ENCODE measurements at regions of chr9 and their contacts with region 1.

Region 1: GRCh38 chr9:89602978-89603766 is 1.6 kb upstream of the GADD45G start:
- DNase-seq: peak; percentile 85
- H3K4me3 Mint-ChIP-seq: peak overlapping the region; percentile 92
- H3K27ac Mint-ChIP-seq: peak overlapping the region; percentile 81
- H3K4me1 Mint-ChIP-seq: peaks cover 32% of the 10 kb centered on the region
- H3K27me3 Mint-ChIP-seq: peaks cover 10% of the 10 kb centered on the region

Region 2: DNA sequence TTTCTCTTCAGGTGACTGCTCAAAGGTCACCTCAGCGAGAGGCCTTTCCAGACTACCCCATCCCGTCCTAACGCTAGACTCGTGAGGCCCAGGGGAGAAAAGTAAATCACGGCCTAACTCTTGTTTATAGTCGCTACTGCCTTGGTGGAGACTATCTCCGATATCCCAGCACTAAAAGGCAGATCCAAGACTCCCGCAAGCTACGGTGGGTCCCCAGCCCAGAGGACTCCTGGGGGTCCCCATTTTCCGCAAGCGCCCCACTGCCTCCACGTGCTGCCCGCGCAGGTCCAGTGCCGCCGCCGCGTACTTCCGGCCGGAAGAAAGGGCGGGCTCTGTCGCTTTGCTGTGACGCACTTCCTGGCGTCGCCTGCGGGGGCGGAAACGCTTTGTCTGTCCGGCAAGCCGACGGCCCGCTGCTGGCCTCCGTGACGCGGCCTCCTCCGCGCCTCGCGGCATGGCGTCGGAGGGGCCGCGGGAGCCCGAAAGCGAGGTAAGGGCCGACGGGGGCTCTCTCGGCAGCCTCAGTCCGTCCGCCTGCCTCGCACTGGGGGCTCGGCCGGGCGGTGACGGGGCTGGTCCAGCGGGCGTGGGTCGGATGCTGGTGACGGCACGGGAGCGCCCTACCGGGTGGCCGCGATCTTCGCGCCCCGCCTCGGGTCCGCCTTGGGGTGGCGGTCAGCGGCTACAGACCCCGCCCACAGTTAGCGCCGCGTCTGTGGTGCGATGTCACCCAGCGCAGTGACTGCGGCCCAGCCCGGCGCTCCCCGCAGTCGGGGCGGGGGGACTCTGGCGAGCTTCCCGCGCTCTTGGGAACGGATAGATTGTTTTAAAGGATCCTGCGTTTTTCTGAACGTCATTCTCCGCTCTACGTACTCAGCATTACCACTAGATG is 284.8 kb before region 1 on chr9 and contains the start of gene SECISBP2:
- intact Hi-C with region 1: loop called (anchors 1 kb)
- DNase-seq: peak; percentile 93
- H3K4me3 Mint-ChIP-seq: peak within 1 kb of the TSS; percentile 90
- H3K27ac Mint-ChIP-seq: peak within 1 kb of the TSS; percentile 95
- H3K4me1 Mint-ChIP-seq: peaks cover 72% of the 10 kb centered on the region
- H3K27me3 Mint-ChIP-seq: no peaks in the 10 kb centered on the region
- total RNA-seq, gene SECISBP2: 49.4 and 54.9 TPM in 2 replicates

Region 3: DNA sequence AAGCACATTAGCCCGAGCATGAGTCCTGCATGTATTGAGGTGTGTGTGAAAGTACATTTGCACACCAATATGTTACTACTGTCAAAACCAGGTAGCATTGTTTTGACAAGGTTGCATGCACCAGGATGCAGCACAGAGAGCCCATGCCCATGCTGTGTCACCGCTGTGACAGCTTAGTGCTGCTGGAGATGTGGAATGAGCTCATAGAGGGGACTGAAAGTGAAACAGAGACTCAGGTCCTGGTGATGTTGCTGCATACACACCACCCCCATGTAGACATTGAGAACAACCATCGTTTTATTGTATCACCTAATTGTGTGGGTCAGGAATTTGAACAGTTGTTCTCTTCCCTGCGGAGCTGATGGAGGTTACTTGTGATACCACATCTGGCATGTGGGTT is 54.6 kb after region 1 on chr9:
- intact Hi-C with region 1: loop called (anchors 2 kb)
- DNase-seq: peak; percentile 64
- H3K4me3 Mint-ChIP-seq: no peak overlapping the region
- H3K27ac Mint-ChIP-seq: peak overlapping the region; percentile 48
- H3K4me1 Mint-ChIP-seq: peaks cover 55% of the 10 kb centered on the region
- H3K27me3 Mint-ChIP-seq: peaks cover 11% of the 10 kb centered on the region

Region 4: GRCh38 chr9:89743573-89744361 is 140.6 kb after region 1 on chr9:
- intact Hi-C with region 1: loop called (anchors 1 kb)
- DNase-seq: peak; percentile 75
- H3K4me3 Mint-ChIP-seq: peak overlapping the region; percentile 25
- H3K27ac Mint-ChIP-seq: peak overlapping the region; percentile 82
- H3K4me1 Mint-ChIP-seq: peaks cover 90% of the 10 kb centered on the region
- H3K27me3 Mint-ChIP-seq: no peaks in the 10 kb centered on the region

Region 5: DNA sequence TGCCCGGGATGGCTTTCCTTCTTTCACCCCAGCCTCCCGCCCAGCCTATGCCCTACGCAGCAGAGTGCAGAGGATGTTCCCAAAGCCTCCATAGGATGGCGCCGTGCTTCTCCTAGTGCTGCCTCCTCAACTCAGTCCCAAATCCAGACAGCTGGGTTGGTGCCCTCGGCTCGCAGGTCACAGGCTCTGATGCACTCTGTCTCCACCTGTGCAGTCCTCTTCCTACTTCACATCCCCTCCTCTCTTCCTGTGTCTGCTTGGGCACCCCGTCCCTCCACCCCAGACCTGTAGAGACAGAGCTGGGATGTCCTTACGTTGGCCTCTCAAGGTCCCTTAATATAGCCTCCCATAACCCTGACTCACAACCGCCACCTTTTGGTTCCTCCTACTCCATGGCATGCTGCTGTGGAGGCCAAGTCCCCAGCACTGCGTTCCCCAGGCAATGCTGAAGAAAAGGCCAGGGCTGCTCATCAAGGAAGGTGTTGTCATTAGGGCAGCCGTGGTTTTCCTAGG is 316.1 kb after region 1 on chr9:
- intact Hi-C with region 1: loop called (anchors 1 kb)
- DNase-seq: peak; percentile 41
- H3K4me3 Mint-ChIP-seq: peak overlapping the region; percentile 16
- H3K27ac Mint-ChIP-seq: no peak overlapping the region
- H3K4me1 Mint-ChIP-seq: peaks cover 51% of the 10 kb centered on the region
- H3K27me3 Mint-ChIP-seq: peaks cover 2% of the 10 kb centered on the region

Region 6: GRCh38 chr9:89999534-90000370 is 396.6 kb after region 1 on chr9:
- intact Hi-C with region 1: loop called (anchors 1 kb)
- DNase-seq: peak; percentile 68
- H3K4me3 Mint-ChIP-seq: peak overlapping the region; percentile 69
- H3K27ac Mint-ChIP-seq: peak overlapping the region; percentile 75
- H3K4me1 Mint-ChIP-seq: peaks cover 35% of the 10 kb centered on the region
- H3K27me3 Mint-ChIP-seq: no peaks in the 10 kb centered on the region

Region 7: GRCh38 chr9:90102292-90102901 is 499.2 kb after region 1 on chr9:
- intact Hi-C with region 1: loop called (anchors 1 kb)
- DNase-seq: peak; percentile 75
- H3K4me3 Mint-ChIP-seq: no peak overlapping the region
- H3K27ac Mint-ChIP-seq: peak overlapping the region; percentile 31
- H3K4me1 Mint-ChIP-seq: peaks cover 18% of the 10 kb centered on the region
- H3K27me3 Mint-ChIP-seq: peaks cover 7% of the 10 kb centered on the region